ENCODE measurements at regions of chr7 and their contacts with region 1.

Region 1: DNA sequence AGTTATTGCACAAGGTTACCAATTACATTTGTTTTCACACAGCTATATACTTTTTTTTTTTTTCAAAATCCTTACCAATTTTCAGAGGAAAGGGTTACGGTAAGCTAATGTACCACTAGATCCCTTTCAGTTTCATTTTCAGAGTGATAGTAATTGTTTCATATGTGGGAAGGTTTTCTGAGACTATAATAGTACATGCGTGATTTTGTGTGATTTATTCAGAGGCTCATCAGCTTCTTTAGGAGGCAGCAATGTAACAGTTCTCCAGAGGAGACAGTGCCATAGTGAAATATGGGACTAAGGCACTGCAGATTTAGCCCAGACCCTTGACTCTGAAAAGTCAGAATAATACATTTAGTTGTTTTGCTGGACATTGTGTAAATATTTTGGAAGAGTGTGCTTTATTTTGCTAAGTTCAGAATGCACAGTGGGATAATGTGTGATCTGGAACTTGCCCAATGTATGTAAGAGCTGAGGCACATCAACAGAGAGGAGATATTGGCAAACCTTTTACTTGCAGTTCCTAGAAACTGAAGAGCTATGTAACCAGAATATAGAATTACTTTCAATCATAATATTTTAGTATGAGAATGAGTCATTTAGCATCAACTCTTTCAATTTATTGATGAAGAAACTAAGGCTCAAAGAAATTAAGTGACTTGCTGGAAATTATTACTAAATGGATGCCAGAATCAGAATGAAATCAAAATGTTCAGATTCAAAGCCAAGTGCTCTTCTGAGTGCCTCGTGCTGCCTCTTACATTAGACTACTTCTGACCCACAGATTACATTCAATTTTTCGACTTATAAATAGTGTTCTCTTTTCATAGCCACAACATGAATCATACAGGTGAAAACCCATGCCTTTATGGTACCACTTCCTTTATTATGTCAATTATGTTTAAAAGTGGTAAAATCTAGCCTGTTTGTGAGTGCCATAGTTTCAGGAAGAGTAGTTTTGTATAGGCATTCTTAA is 207.7 kb upstream of the TEX47 start:
- DNase-seq: no peak
- H3K4me3 Mint-ChIP-seq: peak overlapping the region; percentile 69
- H3K27ac Mint-ChIP-seq: peak overlapping the region; percentile 82
- H3K4me1 Mint-ChIP-seq: peaks cover 16% of the 10 kb centered on the region
- H3K27me3 Mint-ChIP-seq: peaks cover 5% of the 10 kb centered on the region

Region 2: DNA sequence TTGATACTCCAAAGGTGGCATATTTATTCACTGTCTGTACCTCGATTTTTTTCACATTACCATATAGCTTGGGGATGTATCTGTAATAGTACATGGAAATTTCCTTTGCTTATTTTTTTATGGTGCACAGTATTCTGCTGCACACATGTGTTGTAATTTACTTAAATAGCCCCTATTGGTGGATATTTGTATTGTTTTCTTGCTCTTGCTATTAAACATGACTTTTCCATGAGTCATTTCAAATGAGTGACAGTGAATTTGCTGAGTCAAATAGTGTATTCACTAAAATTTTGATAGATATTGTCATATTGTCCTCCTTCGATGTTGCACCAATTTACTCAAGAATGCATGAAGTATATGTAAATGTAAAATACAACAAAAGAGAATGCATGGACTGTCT is 573.9 kb before region 1 on chr7:
- intact Hi-C with region 1: no loop called
- DNase-seq: no peak
- H3K4me3 Mint-ChIP-seq: no peak overlapping the region
- H3K27ac Mint-ChIP-seq: no peak overlapping the region
- H3K4me1 Mint-ChIP-seq: no peaks in the 10 kb centered on the region
- H3K27me3 Mint-ChIP-seq: peaks cover 3% of the 10 kb centered on the region

Region 3: DNA sequence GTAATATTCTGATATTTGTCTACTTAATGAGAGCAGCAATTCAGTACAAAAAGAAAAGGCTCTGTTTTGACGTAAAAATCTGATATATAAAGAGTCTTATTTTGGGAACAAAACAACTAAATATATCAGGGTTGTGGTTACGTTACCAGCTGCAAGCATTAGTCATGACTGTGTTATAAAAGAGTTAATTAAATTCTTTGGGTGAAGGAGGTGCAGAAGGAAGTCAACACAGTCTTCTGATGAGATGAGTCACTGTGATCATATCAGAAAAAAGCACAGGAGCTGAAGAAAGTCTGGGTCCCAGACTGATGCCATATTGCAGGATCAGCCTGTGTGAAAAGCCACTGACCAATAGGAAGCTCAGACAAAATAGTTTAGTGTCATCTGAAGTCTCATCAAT is 26.6 kb after region 1 on chr7:
- intact Hi-C with region 1: loop called (anchors 2 kb)
- DNase-seq: no peak
- H3K4me3 Mint-ChIP-seq: no peak overlapping the region
- H3K27ac Mint-ChIP-seq: no peak overlapping the region
- H3K4me1 Mint-ChIP-seq: no peaks in the 10 kb centered on the region
- H3K27me3 Mint-ChIP-seq: no peaks in the 10 kb centered on the region